ENCODE measurements at regions of chr11 and their contacts with region 1.

Region 1: DNA sequence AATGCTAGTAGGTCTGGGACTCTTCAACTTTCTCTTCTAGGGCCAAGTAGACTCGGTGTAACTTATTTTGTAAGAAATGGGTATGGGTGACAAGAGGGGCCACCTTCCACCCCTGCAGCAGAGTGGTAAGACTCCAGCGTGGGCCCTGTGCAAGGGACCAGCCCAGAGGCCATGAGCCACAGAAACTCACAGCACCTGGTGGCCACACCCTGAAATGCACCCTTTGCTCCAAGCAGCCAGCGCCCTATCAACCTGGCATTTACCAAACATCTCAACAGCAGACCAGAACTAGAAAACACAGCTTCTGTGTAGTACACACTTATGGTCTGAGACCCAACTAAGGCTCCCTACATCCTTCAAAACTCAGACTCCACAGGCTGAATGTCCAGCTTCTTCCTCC is 5.7 kb downstream of the CDCA5 start:
- DNase-seq: peak; percentile 32 to 86
- ATAC-seq: peak; percentile 74 to 79 (median 76)
- H3K4me3 ChIP-seq: no peak overlapping the region
- H3K4me3 Mint-ChIP-seq: no peak overlapping the region
- H3K27ac ChIP-seq: no peak overlapping the region
- H3K27ac Mint-ChIP-seq: peak overlapping the region; percentile 29 to 35
- H3K4me1 ChIP-seq: no peaks in the 10 kb centered on the region
- H3K4me1 Mint-ChIP-seq: peaks cover 4 to 6% of the 10 kb centered on the region in 2 donors
- H3K27me3 ChIP-seq: no peaks in the 10 kb centered on the region
- H3K27me3 Mint-ChIP-seq: no peaks in the 10 kb centered on the region
- CTCF ChIP-seq: peak; percentile 40

Region 2: DNA sequence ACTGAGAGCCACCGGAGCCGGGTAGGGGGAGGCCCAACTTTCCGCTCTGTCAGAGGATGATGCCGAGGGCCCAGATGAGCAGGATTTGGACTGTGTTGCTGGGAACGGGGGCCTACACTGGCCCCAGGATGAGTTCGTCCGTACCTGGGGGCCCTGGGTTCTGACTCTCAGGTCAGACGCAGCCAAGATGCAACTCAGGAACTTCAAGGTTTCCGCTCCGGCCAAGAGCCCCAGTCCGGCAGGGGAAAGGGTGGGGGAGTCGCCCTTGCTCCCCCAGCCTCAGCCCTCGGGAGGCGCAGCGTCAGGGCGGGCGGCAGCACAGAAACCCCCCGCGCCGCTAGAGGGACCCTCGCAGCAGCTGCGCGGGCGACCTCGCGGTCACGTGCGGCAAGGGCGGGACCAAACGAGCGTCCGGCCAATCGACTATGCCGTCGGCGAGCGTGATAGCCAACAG is 64.4 kb before region 1 on chr11:
- intact Hi-C with region 1: loop called (anchors 5 kb)
- DNase-seq: peak in 1 of 2 donors; percentile 94
- ATAC-seq: peak; percentile 85 to 94 (median 87)
- H3K4me3 ChIP-seq: peak overlapping the region; percentile 93
- H3K4me3 Mint-ChIP-seq: peak overlapping the region; percentile 95
- H3K27ac ChIP-seq: peak overlapping the region; percentile 100
- H3K27ac Mint-ChIP-seq: peak overlapping the region; percentile 95 to 96
- H3K4me1 ChIP-seq: peaks cover 26% of the 10 kb centered on the region
- H3K4me1 Mint-ChIP-seq: peaks cover 21 to 29% of the 10 kb centered on the region in 2 donors
- H3K27me3 ChIP-seq: no peaks in the 10 kb centered on the region
- H3K27me3 Mint-ChIP-seq: no peaks in the 10 kb centered on the region
- CTCF ChIP-seq: no peak

Measured in natural killer cell (primary cell).